WTC11 (cell line): ENCODE measurements at regions of chr2 and their contacts with region 1.

Region 1: GRCh38 chr2:200713003-200713703 is 98.6 kb upstream of the BZW1 start:
- DNase-seq: peak; percentile 55
- ATAC-seq: peak; percentile 91
- H3K4me3 Mint-ChIP-seq: peak overlapping the region; percentile 62
- H3K27ac Mint-ChIP-seq: peak overlapping the region; percentile 85
- H3K4me1 Mint-ChIP-seq: peaks cover 11% of the 10 kb centered on the region
- H3K27me3 Mint-ChIP-seq: no peaks in the 10 kb centered on the region
- CTCF ChIP-seq: peak; percentile 28; the same call in 1 of the 2 replicates

Region 2: DNA sequence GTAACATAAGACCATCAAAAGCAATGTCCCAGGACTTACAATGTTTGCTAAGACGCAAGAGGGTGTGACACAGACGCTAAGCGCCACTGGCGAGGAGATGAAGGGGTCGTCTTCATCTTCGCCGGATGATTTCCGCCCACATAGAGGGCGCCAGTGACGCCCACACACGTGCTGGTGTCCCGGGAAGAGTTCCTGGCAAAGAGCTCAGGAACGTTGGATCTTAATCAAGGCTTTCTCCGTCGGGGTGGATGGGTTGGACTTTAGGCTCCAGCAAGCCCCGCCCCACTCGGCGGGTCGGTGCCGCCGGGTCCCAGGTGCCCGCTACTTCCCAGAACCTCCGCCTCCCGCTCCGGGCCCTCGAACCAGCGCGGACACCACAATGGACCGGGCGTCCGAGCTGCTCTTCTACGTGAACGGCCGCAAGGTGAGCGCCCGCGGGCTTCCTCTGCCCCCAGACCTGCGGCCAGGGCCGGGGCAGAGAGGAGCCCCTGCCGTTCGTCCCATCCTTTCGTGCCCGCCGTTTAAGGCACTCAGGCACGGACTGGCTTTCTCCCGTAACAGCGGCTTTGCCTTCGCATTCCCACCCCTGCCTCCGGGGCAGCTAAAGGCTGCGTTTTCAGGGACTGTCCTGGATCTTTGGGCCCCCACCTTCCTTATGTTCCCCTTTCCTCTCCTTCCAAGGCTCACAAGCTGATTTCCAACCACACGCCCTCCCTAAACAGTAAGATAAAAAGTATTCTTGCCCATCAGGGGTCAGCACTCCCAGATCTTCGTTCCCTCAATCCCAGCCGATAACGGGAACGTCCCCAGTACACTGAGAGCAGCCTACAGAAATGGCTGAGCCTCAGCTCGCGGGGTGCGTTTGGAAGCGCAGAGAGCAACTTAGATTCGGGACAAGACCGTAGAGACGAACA is 127.2 kb before region 1 on chr2 and contains the start of gene AOX1:
- CTCF ChIA-PET with region 1: interaction called, 19 read pairs
- POLR2A ChIA-PET with region 1: no interaction called
- DNase-seq: peak; percentile 77
- ATAC-seq: peak; percentile 86
- H3K4me3 Mint-ChIP-seq: peak within 1 kb of the TSS; percentile 83
- H3K27ac Mint-ChIP-seq: peak within 1 kb of the TSS; percentile 74; the same call in 1 of the 2 replicates
- H3K4me1 Mint-ChIP-seq: peaks cover 10% of the 10 kb centered on the region
- H3K27me3 Mint-ChIP-seq: peaks cover 24% of the 10 kb centered on the region
- CTCF ChIP-seq: no peak
- total RNA-seq, gene AOX1: 3.6 to 5.4 TPM (median 4.8 TPM) in 3 replicates

Region 3: GRCh38 chr2:200735061-200735460 is 21.9 kb after region 1 on chr2:
- CTCF ChIA-PET with region 1: interaction called, 48 read pairs
- POLR2A ChIA-PET with region 1: interaction called, 11 read pairs
- DNase-seq: no peak
- ATAC-seq: no peak
- H3K4me3 Mint-ChIP-seq: no peak overlapping the region
- H3K27ac Mint-ChIP-seq: no peak overlapping the region
- H3K4me1 Mint-ChIP-seq: peaks cover 39% of the 10 kb centered on the region
- H3K27me3 Mint-ChIP-seq: no peaks in the 10 kb centered on the region
- CTCF ChIP-seq: no peak

Region 4: GRCh38 chr2:200795044-200795443 is 81.9 kb after region 1 on chr2:
- CTCF ChIA-PET with region 1: interaction called, 21 read pairs
- POLR2A ChIA-PET with region 1: no interaction called
- DNase-seq: peak; percentile 40
- ATAC-seq: peak; percentile 74
- H3K4me3 Mint-ChIP-seq: no peak overlapping the region
- H3K27ac Mint-ChIP-seq: no peak overlapping the region
- H3K4me1 Mint-ChIP-seq: peaks cover 13% of the 10 kb centered on the region
- H3K27me3 Mint-ChIP-seq: no peaks in the 10 kb centered on the region
- CTCF ChIP-seq: no peak

Region 5: DNA sequence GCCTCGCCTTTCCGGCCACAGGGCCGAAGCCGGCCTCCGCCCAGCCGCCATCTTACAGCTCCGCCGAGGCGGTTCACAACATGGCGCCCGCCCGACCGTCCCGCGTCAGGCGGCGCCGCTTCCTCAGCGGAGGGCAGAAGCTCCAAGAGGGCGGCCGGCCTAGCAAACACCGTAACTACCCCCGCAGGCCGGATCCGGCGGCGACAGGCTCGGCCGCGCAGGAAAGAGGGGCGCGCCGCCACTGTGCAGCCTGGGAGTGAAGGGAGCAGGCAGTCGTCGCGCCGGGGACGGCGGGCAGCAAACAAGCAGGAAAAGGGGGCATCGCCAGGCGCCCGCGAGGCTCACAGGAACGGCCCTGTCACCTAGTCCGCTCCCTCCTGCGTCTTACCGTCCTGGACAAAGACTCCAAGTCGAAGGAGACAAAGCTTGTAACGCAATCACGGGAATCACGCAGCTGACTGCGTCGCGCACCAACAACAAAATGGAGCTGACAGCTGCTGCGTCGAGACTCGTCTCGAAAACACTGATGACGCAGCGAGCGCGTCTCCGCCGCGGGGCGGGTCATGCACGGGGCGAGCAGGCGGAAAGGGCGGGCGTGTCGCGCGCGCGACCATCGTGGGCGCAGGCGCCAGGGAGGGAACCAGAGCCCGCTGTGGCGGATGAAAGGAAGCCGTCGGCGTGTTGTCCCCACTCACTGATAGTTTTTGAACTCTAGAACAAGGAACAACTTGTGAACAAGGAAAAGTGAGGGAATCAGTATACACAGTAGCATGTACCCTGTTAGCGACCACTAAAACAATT is 151.2 kb after region 1 on chr2 and contains the start of gene CLK1:
- CTCF ChIA-PET with region 1: interaction called, 13 read pairs
- POLR2A ChIA-PET with region 1: no interaction called
- DNase-seq: peak; percentile 88
- ATAC-seq: peak; percentile 72
- H3K4me3 Mint-ChIP-seq: peak within 1 kb of the TSS; percentile 97
- H3K27ac Mint-ChIP-seq: peak within 1 kb of the TSS; percentile 99
- H3K4me1 Mint-ChIP-seq: peaks cover 24% of the 10 kb centered on the region
- H3K27me3 Mint-ChIP-seq: no peaks in the 10 kb centered on the region
- CTCF ChIP-seq: no peak
- total RNA-seq, gene CLK1: 25.5 to 29.5 TPM (median 25.7 TPM) in 3 replicates